ENCODE measurements at regions of chr16 and their contacts with region 1.

Region 1: GRCh38 chr16:87636072-87636684 is 33.9 kb downstream of the JPH3 start:
- DNase-seq: peak; percentile 89
- H3K27ac ChIP-seq: peak overlapping the region; percentile 43
- CTCF ChIP-seq: peak; percentile 76

Region 2: DNA sequence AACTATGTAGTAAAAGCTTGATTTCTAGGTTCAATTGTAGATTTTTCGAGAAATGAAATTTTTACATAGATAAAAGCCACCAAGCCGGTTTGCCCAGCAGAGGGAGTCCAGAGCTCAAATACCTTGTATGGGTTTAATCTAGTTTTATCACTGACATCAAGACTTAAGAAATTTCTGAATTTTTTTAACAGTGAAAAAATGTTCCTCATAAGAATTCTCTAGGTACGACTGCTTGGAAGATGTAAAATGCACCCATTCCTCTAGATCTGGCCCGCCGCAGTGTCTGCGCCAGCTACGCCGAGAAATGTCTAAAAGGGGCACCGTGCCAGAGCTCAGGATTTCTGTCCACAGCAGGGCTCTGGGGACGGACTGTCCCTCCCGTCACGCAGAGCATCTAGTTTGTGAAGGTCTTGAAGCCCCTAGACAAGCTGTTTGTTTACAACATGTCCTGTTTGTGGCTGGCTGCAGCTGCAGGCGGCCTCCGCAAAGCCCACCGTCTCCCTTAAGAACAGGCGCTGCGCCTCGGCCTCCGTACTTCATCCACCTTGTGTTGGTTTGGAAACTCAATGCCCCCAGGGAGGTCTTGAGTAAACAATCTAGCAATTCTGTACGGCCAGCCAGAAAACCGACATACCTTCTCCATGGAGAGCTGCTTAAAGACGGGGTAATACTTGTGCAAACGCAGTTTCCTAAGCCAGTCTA is 219.2 kb before region 1 on chr16:
- CTCF ChIA-PET with region 1: interaction called, 35 read pairs
- POLR2A ChIA-PET with region 1: no interaction called
- DNase-seq: no peak
- H3K27ac ChIP-seq: peak overlapping the region; percentile 29
- CTCF ChIP-seq: peak; percentile 73

Region 3: DNA sequence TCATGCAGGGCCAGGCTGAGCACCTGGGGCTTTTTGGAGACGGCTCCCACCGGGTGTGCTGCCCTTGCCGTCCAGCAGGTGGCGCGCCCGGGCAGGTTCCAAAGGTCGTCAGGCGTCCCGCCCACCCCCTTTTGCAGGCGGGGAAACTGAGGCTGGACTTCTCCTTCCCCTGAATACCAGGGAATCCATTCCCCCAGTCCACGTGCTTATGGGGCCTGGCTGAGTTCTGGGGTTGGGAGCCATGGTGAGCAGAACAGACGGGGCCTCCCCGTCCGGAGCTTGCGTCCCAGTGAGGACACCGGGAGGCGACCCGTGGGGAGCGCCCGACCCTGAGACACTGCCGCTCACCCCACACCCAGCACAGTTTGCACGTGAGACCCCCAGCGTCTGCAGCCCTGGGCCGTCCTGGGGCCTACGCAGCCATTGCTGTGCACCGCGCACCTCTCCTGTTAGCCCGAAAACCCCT is 85.6 kb before region 1 on chr16:
- CTCF ChIA-PET with region 1: interaction called, 17 read pairs
- POLR2A ChIA-PET with region 1: no interaction called
- DNase-seq: peak; percentile 51
- H3K27ac ChIP-seq: no peak overlapping the region
- CTCF ChIP-seq: peak; percentile 95

Region 4: DNA sequence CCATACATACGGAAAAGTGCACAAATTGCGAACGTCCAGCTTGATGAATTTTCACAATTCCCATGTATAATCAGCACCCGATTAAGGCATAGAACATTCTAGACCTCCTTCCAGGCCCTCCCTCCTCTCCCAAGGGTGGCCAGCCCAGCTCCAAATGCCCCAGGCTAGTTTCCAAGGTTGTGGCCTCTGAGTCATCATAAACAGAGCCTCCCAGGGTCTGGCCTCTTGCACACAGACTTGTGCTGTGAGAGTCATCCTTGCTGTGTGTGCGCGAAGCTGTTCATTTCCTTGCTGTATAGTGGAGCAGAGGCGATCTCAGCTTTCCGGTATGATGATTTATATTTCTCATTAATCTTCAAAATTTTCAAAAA is 54.4 kb before region 1 on chr16:
- CTCF ChIA-PET with region 1: interaction called, 17 read pairs
- POLR2A ChIA-PET with region 1: no interaction called
- DNase-seq: peak; percentile 94
- H3K27ac ChIP-seq: peak overlapping the region; percentile 78
- CTCF ChIP-seq: no peak

Region 5: GRCh38 chr16:87603684-87604633 is 32.2 kb before region 1 on chr16:
- CTCF ChIA-PET with region 1: interaction called, 10 read pairs
- POLR2A ChIA-PET with region 1: no interaction called
- DNase-seq: no peak
- H3K27ac ChIP-seq: no peak overlapping the region
- CTCF ChIP-seq: no peak

Region 6: DNA sequence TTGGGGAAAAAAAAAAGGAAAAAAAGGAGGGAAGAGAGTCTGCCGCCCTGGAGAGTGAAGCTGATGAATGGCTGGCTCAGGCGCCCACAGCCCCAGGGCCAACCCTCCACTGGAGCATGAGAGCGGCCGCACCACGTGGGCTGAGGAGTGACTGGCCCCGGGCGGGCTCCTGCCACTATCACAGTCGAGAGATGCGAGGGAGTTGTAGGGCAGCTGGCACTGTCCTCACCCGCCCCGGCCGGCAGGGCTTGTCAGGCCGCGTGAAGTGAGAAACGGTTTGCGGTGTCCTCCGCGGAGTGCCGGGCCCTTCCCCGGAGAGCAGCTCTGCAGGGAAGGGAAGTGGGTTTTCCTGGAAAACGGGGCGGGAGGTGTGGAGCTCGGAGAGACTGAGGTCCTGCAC is 12.1 kb after region 1 on chr16:
- CTCF ChIA-PET with region 1: interaction called, 23 read pairs
- POLR2A ChIA-PET with region 1: no interaction called
- DNase-seq: no peak
- H3K27ac ChIP-seq: no peak overlapping the region
- CTCF ChIP-seq: no peak

Region 7: GRCh38 chr16:87687126-87687910 is 51.1 kb after region 1 on chr16:
- CTCF ChIA-PET with region 1: no interaction called
- POLR2A ChIA-PET with region 1: no interaction called
- DNase-seq: no peak
- H3K27ac ChIP-seq: no peak overlapping the region
- CTCF ChIP-seq: no peak

Region 8: GRCh38 chr16:87778830-87779579 is 142.8 kb after region 1 on chr16:
- CTCF ChIA-PET with region 1: no interaction called
- POLR2A ChIA-PET with region 1: no interaction called
- DNase-seq: peak; percentile 68
- H3K27ac ChIP-seq: peak overlapping the region; percentile 95
- CTCF ChIP-seq: peak; percentile 91

Measured in RWPE1 (cell line).